ENCODE measurements at regions of chrX and their contacts with region 1.

Region 1: GRCh38 chrX:46408553-46409407 is 136.4 kb downstream of the ZNF674 start:
- DNase-seq: peak; percentile 72
- H3K4me3 Mint-ChIP-seq: no peak overlapping the region
- H3K27ac Mint-ChIP-seq: no peak overlapping the region
- H3K4me1 Mint-ChIP-seq: no peaks in the 10 kb centered on the region
- H3K27me3 Mint-ChIP-seq: no peaks in the 10 kb centered on the region

Region 2: GRCh38 chrX:45515262-45516215 is 893.2 kb before region 1 on chrX:
- CTCF ChIA-PET with region 1: interaction called, 10 read pairs
- DNase-seq: peak; percentile 53
- H3K4me3 Mint-ChIP-seq: no peak overlapping the region
- H3K27ac Mint-ChIP-seq: no peak overlapping the region
- H3K4me1 Mint-ChIP-seq: peaks cover 4% of the 10 kb centered on the region
- H3K27me3 Mint-ChIP-seq: no peaks in the 10 kb centered on the region

Region 3: DNA sequence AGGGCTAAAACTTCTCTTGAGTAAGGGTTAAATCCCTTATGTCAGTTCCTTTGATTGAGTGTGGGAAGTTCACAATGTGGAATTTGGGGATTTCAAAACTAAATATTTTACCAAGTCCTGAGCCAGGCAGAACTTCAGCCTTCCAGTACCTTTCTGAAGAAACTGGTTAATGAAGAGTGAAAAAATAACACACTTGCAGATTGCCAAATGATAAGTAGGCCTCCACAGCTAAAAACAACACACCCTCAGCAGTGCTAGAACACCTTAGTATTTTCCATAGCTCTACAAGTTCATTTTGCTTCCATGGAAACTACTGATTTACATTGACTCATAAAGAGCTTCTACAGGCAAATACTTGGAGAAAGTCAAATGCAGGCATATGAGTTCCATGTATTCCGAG is 190.4 kb before region 1 on chrX:
- CTCF ChIA-PET with region 1: no interaction called
- DNase-seq: no peak
- H3K4me3 Mint-ChIP-seq: no peak overlapping the region
- H3K27ac Mint-ChIP-seq: no peak overlapping the region
- H3K4me1 Mint-ChIP-seq: no peaks in the 10 kb centered on the region
- H3K27me3 Mint-ChIP-seq: no peaks in the 10 kb centered on the region

Region 4: GRCh38 chrX:46381630-46382029 is 27.1 kb before region 1 on chrX:
- CTCF ChIA-PET with region 1: interaction called, 10 read pairs
- DNase-seq: peak; percentile 54
- H3K4me3 Mint-ChIP-seq: no peak overlapping the region
- H3K27ac Mint-ChIP-seq: no peak overlapping the region
- H3K4me1 Mint-ChIP-seq: no peaks in the 10 kb centered on the region
- H3K27me3 Mint-ChIP-seq: peaks cover 10% of the 10 kb centered on the region

Measured in activated naive CD4-positive, alpha-beta T cell treated with anti-CD3 and anti-CD28 coated beads, Interleukin-2, amount 10 ng/mL, durations not matched to agents 7 days and 5 days (primary cell).